ENCODE measurements at regions of chrX and their contacts with region 1.

Region 1: GRCh38 chrX:18425199-18426003 is at the start of gene CDKL5:
- DNase-seq: peak; percentile 93
- H3K4me3 ChIP-seq: peak within 1 kb of the TSS; percentile 70 to 72
- H3K27ac ChIP-seq: peak within 1 kb of the TSS; percentile 53 to 88; a peak in 3 of 4 replicates
- H3K4me1 ChIP-seq: peaks cover 3 to 5% of the 10 kb centered on the region in 2 experiments; a peak in 2 of 4 replicates
- H3K27me3 ChIP-seq: no peaks in the 10 kb centered on the region; the same call in 1 of the 2 replicates
- CTCF ChIP-seq: no peak
- EP300 ChIP-seq: no peak
- RAD21 ChIP-seq: no peak
- polyA plus RNA-seq, gene CDKL5: 1.3 and 1.9 TPM in 2 replicates

Region 2: GRCh38 chrX:18410043-18410442 is 15.4 kb before region 1 on chrX:
- CTCF ChIA-PET with region 1: interaction called, 11 read pairs
- POLR2A ChIA-PET with region 1: no interaction called
- DNase-seq: peak; percentile 48
- H3K4me3 ChIP-seq: no peak overlapping the region
- H3K27ac ChIP-seq: no peak overlapping the region
- H3K4me1 ChIP-seq: no peaks in the 10 kb centered on the region; a peak in 1 of 4 replicates
- H3K27me3 ChIP-seq: no peaks in the 10 kb centered on the region
- CTCF ChIP-seq: peak; percentile 55
- EP300 ChIP-seq: no peak
- RAD21 ChIP-seq: peak; percentile 88

Region 3: DNA sequence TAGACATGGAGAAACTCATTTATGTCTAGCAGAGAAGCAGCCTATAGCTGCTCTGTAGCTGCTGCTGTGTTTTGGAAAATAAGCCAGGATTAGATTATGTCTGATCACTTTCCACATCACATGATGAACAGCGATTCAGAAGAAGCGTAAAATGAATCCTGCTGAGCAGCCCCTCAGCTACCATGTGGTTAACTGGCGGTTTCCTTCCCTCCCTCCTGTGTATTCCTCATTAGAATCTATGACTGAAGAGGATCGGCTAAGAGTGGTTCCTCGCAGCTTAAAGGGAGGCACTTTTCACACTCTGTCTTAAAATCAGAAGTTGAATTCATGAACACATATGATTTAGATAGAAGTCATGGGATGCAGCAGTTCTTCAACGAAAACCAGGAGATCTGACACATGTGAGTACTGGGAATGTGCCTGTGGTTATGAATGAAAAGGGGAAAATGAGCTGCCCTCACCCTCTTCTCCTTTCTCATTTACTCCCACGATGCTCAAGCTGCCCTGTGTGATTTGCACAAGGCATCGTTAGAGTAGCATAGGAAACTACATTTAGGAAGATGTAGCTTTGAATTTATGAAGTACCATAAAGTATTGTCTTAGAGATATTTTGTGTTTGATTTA is 282.1 kb after region 1 on chrX and contains the start of gene PPEF1:
- CTCF ChIA-PET with region 1: no interaction called
- POLR2A ChIA-PET with region 1: interaction called, 11 read pairs
- DNase-seq: peak; percentile 74
- H3K4me3 ChIP-seq: peak within 1 kb of the TSS in 1 of 2 experiments; percentile 36; a peak in 2 of 4 replicates
- H3K27ac ChIP-seq: peak within 1 kb of the TSS in 1 of 2 experiments; percentile 98; a peak in 2 of 4 replicates
- H3K4me1 ChIP-seq: peaks cover 0 to 4% of the 10 kb centered on the region in 2 experiments; a peak in 3 of 4 replicates
- H3K27me3 ChIP-seq: no peaks in the 10 kb centered on the region; the same call in 1 of the 2 replicates
- CTCF ChIP-seq: no peak
- EP300 ChIP-seq: peak in 1 of 2 experiments; percentile 61; a peak in 1 of 4 replicates
- RAD21 ChIP-seq: peak; percentile 27; the same call in 1 of the 2 replicates
- polyA plus RNA-seq, gene PPEF1: 0.16 and 0.58 TPM in 2 replicates

Region 4: DNA sequence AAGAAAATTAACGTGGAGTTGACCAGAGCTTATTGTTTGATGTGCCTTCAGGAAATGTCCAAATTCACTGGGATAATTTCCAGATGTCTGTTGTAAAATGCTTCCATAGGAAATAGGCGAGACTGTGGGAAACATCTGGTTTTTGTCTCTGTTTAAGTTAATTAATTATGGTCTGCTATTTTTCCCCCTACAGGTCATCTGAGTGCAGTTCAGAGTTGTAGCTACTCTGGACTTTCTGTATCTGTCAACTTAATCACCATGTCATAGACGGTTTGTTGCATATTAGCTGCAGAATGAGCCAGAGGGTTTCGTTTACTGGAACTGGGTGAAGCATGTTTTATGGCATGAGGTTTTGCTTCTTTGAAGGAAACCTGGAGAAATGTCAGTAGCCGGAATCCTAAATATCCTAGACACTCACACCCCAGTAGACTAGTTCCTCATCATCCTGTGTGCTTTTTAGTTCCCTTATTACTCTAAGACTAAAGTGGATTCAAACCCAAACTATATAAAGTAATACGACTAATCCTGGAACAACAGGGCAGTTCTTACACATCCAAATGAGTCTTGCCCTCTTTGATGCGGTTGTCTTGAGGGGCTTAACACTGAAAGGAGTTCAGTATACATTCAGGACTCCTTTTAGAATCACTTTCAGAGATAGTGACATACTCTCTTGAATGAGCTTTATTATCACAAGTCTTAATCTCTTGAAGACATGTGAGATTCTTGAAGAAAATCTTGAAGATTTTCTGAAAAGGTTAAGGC is 344.6 kb after region 1 on chrX:
- CTCF ChIA-PET with region 1: interaction called, 3 read pairs
- POLR2A ChIA-PET with region 1: interaction called, 17 read pairs
- DNase-seq: peak; percentile 76
- H3K4me3 ChIP-seq: no peak overlapping the region
- H3K27ac ChIP-seq: peak overlapping the region; percentile 56 to 100; a peak in 3 of 4 replicates
- H3K4me1 ChIP-seq: peaks cover 0 to 28% of the 10 kb centered on the region in 2 experiments; a peak in 2 of 4 replicates
- H3K27me3 ChIP-seq: no peaks in the 10 kb centered on the region
- CTCF ChIP-seq: no peak; the same call in 1 of the 2 replicates
- EP300 ChIP-seq: peak; percentile 61 to 99; a peak in 3 of 4 replicates
- RAD21 ChIP-seq: peak; percentile 55

Measured in SK-N-SH (cell line).